Transverse colon (tissue), 4 donors: ENCODE measurements at regions of chr5 and their contacts with region 1.

Region 1: DNA sequence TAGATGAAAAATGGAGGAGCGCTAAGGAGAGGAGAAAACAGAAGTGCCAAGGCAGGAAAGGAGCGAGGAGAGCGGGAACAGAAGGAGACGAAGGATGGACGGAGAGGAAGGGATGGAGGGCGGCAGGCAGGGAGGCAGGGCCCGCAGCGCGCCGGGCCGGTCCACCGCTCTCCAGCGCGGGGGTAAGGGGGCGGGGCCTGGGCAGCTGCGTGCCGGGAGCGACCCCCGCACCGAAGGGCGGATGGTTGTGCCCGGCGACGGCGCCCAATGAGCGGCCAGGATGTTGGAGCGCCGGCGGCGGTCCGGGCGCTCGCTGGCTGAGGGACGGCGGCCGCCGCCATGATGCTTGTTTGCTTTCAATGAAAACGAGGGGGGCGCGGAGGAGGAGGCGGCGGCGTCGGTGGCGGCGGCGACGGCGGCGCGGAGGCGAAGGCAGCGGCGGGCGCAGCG is at the start of gene CNOT6:
- DNase-seq: peak; percentile 95
- H3K4me3 ChIP-seq: peak within 1 kb of the TSS; percentile 58 to 98 (median 82)
- H3K27ac ChIP-seq: peak within 1 kb of the TSS; percentile 88 to 99 (median 94)
- H3K4me1 ChIP-seq: peaks cover 0 to 28% (median 22%) of the 10 kb centered on the region in 4 donors
- H3K27me3 ChIP-seq: no peaks in the 10 kb centered on the region
- CTCF ChIP-seq: no peak
- EP300 ChIP-seq: no peak
- POLR2A ChIP-seq: no peak
- total RNA-seq, gene CNOT6: 14.6 to 20.0 (median 19.3) TPM

Region 2: DNA sequence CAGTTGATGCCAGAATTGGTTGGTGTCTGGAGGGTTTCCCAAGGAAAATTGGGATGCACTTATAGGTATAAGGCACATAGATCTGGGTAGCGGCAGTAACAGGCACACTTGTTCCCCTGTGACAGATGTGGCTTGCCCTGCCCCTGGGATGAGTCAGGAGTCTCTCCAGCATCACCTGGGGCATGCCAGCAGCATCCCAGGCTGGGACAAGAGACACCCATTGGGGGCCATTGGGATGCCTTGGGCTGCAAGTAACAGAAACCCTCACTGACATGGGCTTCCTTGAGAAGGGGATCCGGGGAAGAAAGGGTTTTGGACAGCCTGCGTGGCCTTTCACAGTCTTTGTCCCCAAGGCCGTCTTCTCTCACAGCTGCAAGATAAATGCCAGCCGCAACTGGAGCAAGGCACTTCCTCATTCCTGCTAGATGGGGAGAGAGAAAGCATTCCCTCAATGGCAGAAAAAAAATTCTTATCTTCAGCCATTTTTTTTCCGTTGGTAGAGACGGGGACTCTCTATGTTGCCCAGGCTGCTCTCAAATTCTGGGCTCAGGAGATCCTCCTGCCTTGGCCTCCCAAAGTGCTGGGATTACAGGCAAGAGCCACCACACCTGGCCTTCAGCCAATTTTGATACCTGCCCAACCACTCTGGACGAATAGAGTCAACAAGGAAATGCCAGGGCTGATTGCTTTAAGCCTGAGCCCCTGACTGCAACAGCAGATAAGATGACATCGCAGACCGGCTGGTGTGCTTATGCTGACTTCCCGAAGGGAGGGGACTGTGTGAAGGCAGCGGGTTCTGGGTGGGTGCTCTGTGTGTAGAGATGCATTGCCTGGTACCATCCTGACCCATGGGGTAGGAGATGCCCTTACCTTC is 409.2 kb before region 1 on chr5:
- in situ Hi-C with region 1: no loop called
- intact Hi-C with region 1: loop called (anchors 10 kb)
- DNase-seq: peak; percentile 80
- H3K4me3 ChIP-seq: no peak overlapping the region
- H3K27ac ChIP-seq: peak overlapping the region in 3 of 4 donors; percentile 35 to 57 (median 49)
- H3K4me1 ChIP-seq: peaks cover 0 to 16% (median 3%) of the 10 kb centered on the region in 4 donors
- H3K27me3 ChIP-seq: peaks cover 1% of the 10 kb centered on the region
- CTCF ChIP-seq: no peak
- EP300 ChIP-seq: no peak
- POLR2A ChIP-seq: no peak

Region 3: GRCh38 chr5:180291943-180292831 is 201.9 kb before region 1 on chr5 and contains the start of gene MAPK9:
- in situ Hi-C with region 1: loop called in 1 of 4 experiments (anchors 25 kb)
- intact Hi-C with region 1: no loop called
- DNase-seq: peak; percentile 88
- H3K4me3 ChIP-seq: peak within 1 kb of the TSS; percentile 86 to 97 (median 93)
- H3K27ac ChIP-seq: peak within 1 kb of the TSS; percentile 94 to 99 (median 96)
- H3K4me1 ChIP-seq: peaks cover 11 to 34% (median 21%) of the 10 kb centered on the region in 4 donors
- H3K27me3 ChIP-seq: no peaks in the 10 kb centered on the region
- CTCF ChIP-seq: no peak
- EP300 ChIP-seq: no peak
- POLR2A ChIP-seq: peak; percentile 48
- total RNA-seq, gene MAPK9: 25.5 to 42.3 (median 36.5) TPM